CD4-positive, alpha-beta T cell (primary cell): ENCODE measurements at regions of chr1 and their contacts with region 1.

Region 1: GRCh38 chr1:45339789-45340570 is at the starts of genes MUTYH and TOE1:
- DNase-seq: peak; percentile 83 to 94 (median 88)
- ATAC-seq: peak; percentile 79
- H3K4me3 ChIP-seq: peak within 1 kb of the TSS; percentile 98
- H3K4me3 Mint-ChIP-seq: peak within 1 kb of the TSS; percentile 100
- H3K27ac ChIP-seq: peak within 1 kb of the TSS; percentile 98 to 100
- H3K27ac Mint-ChIP-seq: peak within 1 kb of the TSS; percentile 95
- H3K4me1 ChIP-seq: peaks cover 42% of the 10 kb centered on the region
- H3K4me1 Mint-ChIP-seq: peaks cover 58% of the 10 kb centered on the region
- H3K27me3 ChIP-seq: no peaks in the 10 kb centered on the region
- H3K27me3 Mint-ChIP-seq: no peaks in the 10 kb centered on the region
- CTCF ChIP-seq: no peak
- total RNA-seq, gene MUTYH: 57.9 to 67.4 TPM
- total RNA-seq, gene TOE1: 44.5 to 46.2 TPM

Region 2: GRCh38 chr1:44730741-44731512 is 609.1 kb before region 1 on chr1 and contains the start of gene RNU5D-1:
- CTCF ChIA-PET with region 1: no interaction called
- POLR2A ChIA-PET with region 1: interaction called, 19 read pairs
- intact Hi-C with region 1: no loop called
- DNase-seq: peak; percentile 87 to 98 (median 94)
- ATAC-seq: peak; percentile 76
- H3K4me3 ChIP-seq: peak within 1 kb of the TSS; percentile 46
- H3K4me3 Mint-ChIP-seq: peak within 1 kb of the TSS; percentile 68
- H3K27ac ChIP-seq: peak within 1 kb of the TSS; percentile 93 to 96
- H3K27ac Mint-ChIP-seq: peak within 1 kb of the TSS; percentile 97
- H3K4me1 ChIP-seq: peaks cover 33% of the 10 kb centered on the region
- H3K4me1 Mint-ChIP-seq: peaks cover 35% of the 10 kb centered on the region
- H3K27me3 ChIP-seq: no peaks in the 10 kb centered on the region
- H3K27me3 Mint-ChIP-seq: no peaks in the 10 kb centered on the region
- CTCF ChIP-seq: peak; percentile 77
- total RNA-seq, gene RNU5D-1: not detected

Region 3: DNA sequence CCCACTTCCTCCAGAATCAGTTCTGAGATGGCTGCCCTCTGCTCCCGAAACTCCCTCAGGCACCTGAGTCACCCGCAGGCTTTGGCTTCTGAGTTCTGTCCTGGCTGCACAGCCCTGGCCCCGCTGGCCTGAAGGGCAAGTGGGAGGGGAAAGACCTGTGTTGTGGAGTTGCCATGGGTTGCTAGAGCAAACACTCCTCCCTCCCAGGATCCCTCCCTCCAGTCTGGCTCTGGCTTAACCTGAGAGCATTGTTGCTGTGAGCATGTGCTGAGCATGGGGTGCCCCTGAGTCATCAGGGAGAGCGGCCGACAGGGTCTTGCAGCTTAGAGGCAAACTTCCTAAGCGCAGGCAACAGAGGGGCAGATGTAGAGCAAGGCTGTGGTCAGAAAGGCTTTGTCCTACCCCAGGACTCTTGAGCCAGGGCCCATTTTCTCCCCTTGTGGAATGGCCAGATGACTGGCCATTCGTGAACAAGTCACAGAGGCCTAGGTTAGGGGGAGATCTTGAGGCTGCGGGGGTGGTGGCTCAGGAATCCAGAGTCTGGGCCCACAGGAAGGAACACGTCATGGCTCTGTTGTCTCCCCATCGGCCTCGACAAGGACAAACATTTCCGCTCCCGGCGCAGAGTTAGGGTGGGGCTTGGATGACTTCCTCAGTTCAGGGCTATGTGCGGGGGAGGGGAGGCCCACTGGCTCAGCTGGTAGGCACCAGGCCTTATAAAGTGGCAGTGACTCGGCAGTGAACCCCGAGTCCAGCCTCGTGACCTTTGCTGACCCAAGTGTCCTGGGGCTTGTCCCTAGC is 532.5 kb before region 1 on chr1 and contains the start of gene DYNLT4:
- CTCF ChIA-PET with region 1: no interaction called
- POLR2A ChIA-PET with region 1: interaction called, 17 read pairs
- intact Hi-C with region 1: no loop called
- DNase-seq: peak; percentile 82 to 98 (median 94)
- ATAC-seq: peak; percentile 56
- H3K4me3 ChIP-seq: peak within 1 kb of the TSS; percentile 12
- H3K4me3 Mint-ChIP-seq: peak within 1 kb of the TSS; percentile 83
- H3K27ac ChIP-seq: peak within 1 kb of the TSS; percentile 99 to 100
- H3K27ac Mint-ChIP-seq: peak within 1 kb of the TSS; percentile 99
- H3K4me1 ChIP-seq: peaks cover 100% of the 10 kb centered on the region
- H3K4me1 Mint-ChIP-seq: peaks cover 79% of the 10 kb centered on the region
- H3K27me3 ChIP-seq: no peaks in the 10 kb centered on the region
- H3K27me3 Mint-ChIP-seq: peaks cover 4% of the 10 kb centered on the region
- CTCF ChIP-seq: no peak
- total RNA-seq, gene DYNLT4: 1.8 to 2.1 TPM

Region 4: GRCh38 chr1:45011837-45012638 is 327.9 kb before region 1 on chr1 and contains the start of gene UROD:
- CTCF ChIA-PET with region 1: interaction called, 3 read pairs
- POLR2A ChIA-PET with region 1: interaction called, 112 read pairs
- intact Hi-C with region 1: loop called (anchors 1 kb)
- DNase-seq: peak; percentile 77 to 96 (median 86)
- ATAC-seq: peak; percentile 82
- H3K4me3 ChIP-seq: peak within 1 kb of the TSS; percentile 84
- H3K4me3 Mint-ChIP-seq: peak within 1 kb of the TSS; percentile 89
- H3K27ac ChIP-seq: peak within 1 kb of the TSS; percentile 59 to 62
- H3K27ac Mint-ChIP-seq: peak within 1 kb of the TSS; percentile 91
- H3K4me1 ChIP-seq: peaks cover 63% of the 10 kb centered on the region
- H3K4me1 Mint-ChIP-seq: peaks cover 61% of the 10 kb centered on the region
- H3K27me3 ChIP-seq: no peaks in the 10 kb centered on the region
- H3K27me3 Mint-ChIP-seq: no peaks in the 10 kb centered on the region
- CTCF ChIP-seq: no peak
- total RNA-seq, gene UROD: 41.0 to 42.4 TPM

Region 5: GRCh38 chr1:45490626-45491486 is 150.9 kb after region 1 on chr1 and contains the start of gene TESK2:
- CTCF ChIA-PET with region 1: interaction called, 11 read pairs
- POLR2A ChIA-PET with region 1: interaction called, 76 read pairs
- intact Hi-C with region 1: loop called in 1 of 2 experiments (anchors 5 kb)
- DNase-seq: peak; percentile 92 to 100 (median 95)
- ATAC-seq: peak; percentile 92
- H3K4me3 ChIP-seq: peak within 1 kb of the TSS; percentile 82
- H3K4me3 Mint-ChIP-seq: no peak within 1 kb of the TSS
- H3K27ac ChIP-seq: peak within 1 kb of the TSS; percentile 55 to 70
- H3K27ac Mint-ChIP-seq: no peak within 1 kb of the TSS
- H3K4me1 ChIP-seq: peaks cover 28% of the 10 kb centered on the region
- H3K4me1 Mint-ChIP-seq: peaks cover 5% of the 10 kb centered on the region
- H3K27me3 ChIP-seq: no peaks in the 10 kb centered on the region
- H3K27me3 Mint-ChIP-seq: no peaks in the 10 kb centered on the region
- CTCF ChIP-seq: no peak
- total RNA-seq, gene TESK2: 2.8 to 3.4 TPM

Region 6: DNA sequence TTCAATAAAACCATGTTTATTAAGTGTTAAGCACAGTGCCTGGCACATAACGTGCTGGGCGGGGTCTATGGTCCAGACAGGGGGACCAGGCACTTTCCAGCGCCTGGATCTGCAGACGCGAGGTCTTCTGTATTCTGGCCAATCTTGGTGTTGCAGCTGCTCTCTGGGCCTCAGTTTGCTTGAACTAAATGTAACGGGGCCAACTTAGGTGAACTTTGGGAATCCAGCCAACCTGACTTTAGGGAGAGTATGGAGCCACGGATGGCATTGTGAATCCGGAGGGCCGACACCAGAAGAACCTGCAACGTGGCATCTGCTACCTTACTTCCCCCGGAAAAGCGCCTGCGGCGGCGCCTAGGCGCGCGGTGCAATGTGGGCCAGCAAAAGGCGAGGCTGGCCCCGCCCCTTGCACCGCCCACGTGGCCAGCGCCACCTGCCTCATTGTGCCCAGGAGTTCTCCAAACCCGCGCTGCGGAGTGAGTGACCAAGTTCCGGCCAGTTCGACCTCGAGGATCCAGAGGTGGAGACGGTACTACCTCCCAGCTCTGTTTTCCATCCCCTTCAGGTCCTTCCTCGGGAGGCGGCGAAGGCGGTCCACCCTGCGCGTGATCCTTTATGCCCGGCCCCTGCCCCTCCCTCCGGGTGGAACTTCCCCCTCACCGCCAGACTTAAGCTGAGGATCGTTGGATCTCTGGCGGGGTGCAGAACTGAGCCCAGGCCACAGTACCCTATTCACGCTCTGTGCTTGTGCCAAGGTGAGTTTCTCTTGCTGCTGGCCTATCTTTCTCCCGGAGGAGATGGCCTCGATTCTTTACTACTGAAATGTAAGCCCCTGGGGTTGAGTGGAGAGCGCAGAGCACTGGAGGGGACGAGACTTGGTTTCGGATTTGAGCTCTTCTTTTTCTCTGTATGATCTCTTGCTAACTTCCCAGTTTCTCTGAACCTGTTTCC is 210.7 kb after region 1 on chr1 and contains the start of gene AKR1A1:
- CTCF ChIA-PET with region 1: no interaction called
- POLR2A ChIA-PET with region 1: interaction called, 17 read pairs
- intact Hi-C with region 1: no loop called
- DNase-seq: peak; percentile 70 to 94 (median 84)
- ATAC-seq: peak; percentile 95
- H3K4me3 ChIP-seq: peak within 1 kb of the TSS; percentile 73
- H3K4me3 Mint-ChIP-seq: peak within 1 kb of the TSS; percentile 98
- H3K27ac ChIP-seq: peak within 1 kb of the TSS; percentile 85 to 90
- H3K27ac Mint-ChIP-seq: peak within 1 kb of the TSS; percentile 89
- H3K4me1 ChIP-seq: peaks cover 27% of the 10 kb centered on the region
- H3K4me1 Mint-ChIP-seq: peaks cover 26% of the 10 kb centered on the region
- H3K27me3 ChIP-seq: no peaks in the 10 kb centered on the region
- H3K27me3 Mint-ChIP-seq: no peaks in the 10 kb centered on the region
- CTCF ChIP-seq: no peak
- total RNA-seq, gene AKR1A1: 25.3 to 31.0 TPM